ENCODE measurements at regions of chr6 and their contacts with region 1.

Region 1: DNA sequence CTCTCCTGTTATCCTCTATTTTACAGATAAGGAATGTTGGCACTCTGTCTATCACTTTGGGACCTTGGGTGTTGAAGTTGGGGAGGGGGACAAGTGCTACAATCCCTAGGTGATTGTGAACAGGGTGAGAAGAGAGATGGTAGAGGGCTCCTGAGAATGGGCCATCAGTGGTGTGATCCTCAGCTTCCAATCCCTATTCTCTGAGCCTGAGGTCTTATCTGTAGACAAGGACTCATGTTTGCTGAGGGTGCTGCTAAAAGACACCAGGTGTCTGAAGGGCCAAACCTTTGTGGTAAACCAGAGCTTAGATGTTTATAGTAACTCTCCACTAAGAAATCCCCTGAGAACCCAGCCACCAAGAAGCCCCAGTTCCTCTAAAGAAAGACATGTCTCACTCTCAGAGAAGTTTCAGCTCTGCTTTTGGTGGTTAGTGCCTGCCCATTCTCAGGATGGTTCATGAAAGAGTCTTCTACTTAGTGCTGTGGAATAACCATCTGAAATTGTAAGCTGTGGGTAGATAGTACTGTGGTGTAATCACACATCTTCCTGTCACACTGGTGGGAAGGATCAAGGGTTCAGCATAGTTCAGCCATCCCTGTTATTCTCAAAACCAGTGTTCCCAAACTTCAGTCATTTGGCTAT is 58.2 kb upstream of the IL20RA start:
- DNase-seq: no peak
- ATAC-seq: peak; percentile 81
- H3K4me3 Mint-ChIP-seq: peak overlapping the region; percentile 80
- H3K27ac Mint-ChIP-seq: peak overlapping the region; percentile 98
- H3K4me1 Mint-ChIP-seq: peaks cover 93% of the 10 kb centered on the region
- H3K27me3 Mint-ChIP-seq: no peaks in the 10 kb centered on the region
- CTCF ChIP-seq: no peak

Region 2: GRCh38 chr6:137043710-137044365 is 59.1 kb before region 1 on chr6:
- CTCF ChIA-PET with region 1: no interaction called
- POLR2A ChIA-PET with region 1: no interaction called
- intact Hi-C with region 1: no loop called
- DNase-seq: no peak
- ATAC-seq: peak; percentile 21
- H3K4me3 Mint-ChIP-seq: peak overlapping the region; percentile 81
- H3K27ac Mint-ChIP-seq: no peak overlapping the region
- H3K4me1 Mint-ChIP-seq: peaks cover 6% of the 10 kb centered on the region
- H3K27me3 Mint-ChIP-seq: peaks cover 67% of the 10 kb centered on the region
- CTCF ChIP-seq: no peak

Region 3: DNA sequence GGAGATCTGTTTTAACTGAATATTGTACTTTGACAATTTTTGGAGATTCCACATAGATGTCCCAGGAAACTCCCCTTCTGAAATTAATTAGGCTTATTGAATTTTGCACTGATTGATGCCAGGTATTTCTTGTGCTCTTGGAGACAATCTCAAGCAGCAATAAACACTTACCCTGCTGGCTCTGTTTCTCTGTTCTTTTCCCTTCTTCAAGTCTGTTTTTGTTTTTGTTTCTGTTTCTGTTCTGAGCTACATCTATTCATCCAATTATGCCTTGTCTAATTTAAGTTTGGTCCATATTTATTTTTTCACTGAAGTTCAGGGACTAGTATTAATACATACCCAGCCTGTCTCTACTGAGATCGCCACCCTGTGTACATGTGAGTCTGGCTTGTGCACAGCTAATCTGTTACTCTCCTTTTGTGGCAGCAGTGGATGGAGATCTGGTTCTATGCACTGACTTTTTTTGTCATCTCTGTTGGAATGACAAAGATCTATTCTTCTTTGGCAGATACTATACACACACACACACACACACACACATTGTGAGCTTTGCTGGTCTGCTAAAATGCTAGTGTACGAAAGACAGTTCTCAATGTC is 18.5 kb after region 1 on chr6:
- CTCF ChIA-PET with region 1: interaction called, 11 read pairs
- POLR2A ChIA-PET with region 1: interaction called, 14 read pairs
- intact Hi-C with region 1: loop called (anchors 1 kb)
- DNase-seq: no peak
- ATAC-seq: peak; percentile 58
- H3K4me3 Mint-ChIP-seq: peak overlapping the region; percentile 70
- H3K27ac Mint-ChIP-seq: peak overlapping the region; percentile 91
- H3K4me1 Mint-ChIP-seq: peaks cover 44% of the 10 kb centered on the region
- H3K27me3 Mint-ChIP-seq: no peaks in the 10 kb centered on the region
- CTCF ChIP-seq: no peak

Region 4: GRCh38 chr6:137171824-137172705 is 69.1 kb after region 1 on chr6:
- CTCF ChIA-PET with region 1: interaction called, 82 read pairs
- POLR2A ChIA-PET with region 1: interaction called, 45 read pairs
- intact Hi-C with region 1: loop called (anchors 1 kb)
- DNase-seq: no peak
- ATAC-seq: peak; percentile 68
- H3K4me3 Mint-ChIP-seq: peak overlapping the region; percentile 63
- H3K27ac Mint-ChIP-seq: peak overlapping the region; percentile 95
- H3K4me1 Mint-ChIP-seq: peaks cover 90% of the 10 kb centered on the region
- H3K27me3 Mint-ChIP-seq: no peaks in the 10 kb centered on the region
- CTCF ChIP-seq: no peak

Region 5: DNA sequence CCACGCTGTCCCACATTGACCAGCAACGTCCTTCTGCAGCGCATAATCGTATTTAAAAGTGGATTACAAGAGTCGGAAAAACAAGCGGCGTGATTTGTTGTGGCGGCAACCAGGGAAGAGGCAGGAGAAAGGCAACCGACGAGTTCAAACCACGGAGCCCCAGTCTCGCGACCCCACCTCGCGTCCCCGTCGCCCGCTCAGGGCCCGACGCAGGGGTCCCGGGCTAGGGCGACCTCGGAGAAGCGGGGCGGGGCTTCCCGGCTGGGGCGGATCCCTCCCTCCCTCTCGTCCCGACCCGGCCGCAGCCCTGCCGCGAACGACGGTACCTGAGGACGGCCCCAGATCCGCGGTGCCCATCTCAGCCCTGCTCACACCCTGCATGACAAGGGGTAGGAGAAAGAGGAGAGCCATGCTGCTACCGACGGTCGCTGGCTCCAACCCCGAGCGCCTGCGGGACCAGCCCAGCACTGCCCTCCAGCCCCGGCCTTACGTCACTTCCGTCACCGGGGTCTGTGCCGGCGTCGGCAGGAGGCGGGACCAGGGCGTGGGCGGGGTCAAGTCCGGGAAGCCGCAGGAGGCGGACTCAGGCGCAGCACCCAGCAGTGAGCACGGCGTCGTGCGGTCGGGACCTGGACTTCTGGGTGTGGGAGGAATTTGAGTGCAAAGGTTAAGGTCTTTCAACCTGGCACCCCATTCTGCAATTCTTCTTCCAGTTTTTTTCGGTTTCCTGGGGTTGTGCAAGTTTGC is 116.1 kb after region 1 on chr6 and contains the start of gene IFNGR1:
- CTCF ChIA-PET with region 1: interaction called, 8 read pairs
- POLR2A ChIA-PET with region 1: interaction called, 18 read pairs
- intact Hi-C with region 1: loop called (anchors 1 kb)
- DNase-seq: peak; percentile 97
- ATAC-seq: peak; percentile 85
- H3K4me3 Mint-ChIP-seq: peak within 1 kb of the TSS; percentile 99
- H3K27ac Mint-ChIP-seq: peak within 1 kb of the TSS; percentile 98
- H3K4me1 Mint-ChIP-seq: peaks cover 83% of the 10 kb centered on the region
- H3K27me3 Mint-ChIP-seq: no peaks in the 10 kb centered on the region
- CTCF ChIP-seq: no peak
- total RNA-seq, gene IFNGR1: 60.5 and 65.6 TPM in 2 replicates

Region 6: GRCh38 chr6:137233911-137234863 is 131.2 kb after region 1 on chr6:
- CTCF ChIA-PET with region 1: no interaction called
- POLR2A ChIA-PET with region 1: interaction called, 3 read pairs
- intact Hi-C with region 1: loop called (anchors 1 kb)
- DNase-seq: no peak
- ATAC-seq: peak; percentile 76
- H3K4me3 Mint-ChIP-seq: peak overlapping the region; percentile 73
- H3K27ac Mint-ChIP-seq: peak overlapping the region; percentile 80
- H3K4me1 Mint-ChIP-seq: peaks cover 70% of the 10 kb centered on the region
- H3K27me3 Mint-ChIP-seq: no peaks in the 10 kb centered on the region
- CTCF ChIP-seq: no peak

Region 7: DNA sequence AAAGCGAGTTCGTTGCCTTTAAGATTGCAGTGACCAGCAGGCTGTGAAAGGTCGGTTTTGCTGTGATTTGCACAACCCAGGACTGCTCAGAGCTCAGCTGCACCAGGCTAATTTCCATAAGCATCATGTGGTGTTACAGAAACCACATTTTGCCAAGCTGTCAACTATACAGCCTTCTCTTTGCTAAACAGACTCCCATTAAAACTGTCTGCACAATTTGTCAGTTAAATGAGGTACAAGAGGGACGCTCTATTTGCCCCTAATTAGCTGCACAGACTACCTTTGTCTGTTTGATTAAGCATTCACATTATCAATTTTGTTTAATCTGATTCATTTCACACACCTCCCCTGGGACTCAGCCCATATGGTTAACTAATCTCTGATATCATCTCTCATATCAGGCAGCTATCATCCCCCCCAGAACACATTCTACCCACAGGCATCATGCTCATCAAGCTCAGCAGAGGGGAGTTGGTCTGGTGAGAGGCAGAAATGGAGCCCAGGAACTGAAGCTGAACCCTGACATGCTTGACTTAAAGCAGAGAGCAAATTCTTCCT is 329.2 kb after region 1 on chr6:
- CTCF ChIA-PET with region 1: no interaction called
- POLR2A ChIA-PET with region 1: interaction called, 6 read pairs
- intact Hi-C with region 1: loop called (anchors 2 kb)
- DNase-seq: no peak
- ATAC-seq: peak; percentile 65
- H3K4me3 Mint-ChIP-seq: peak overlapping the region; percentile 81
- H3K27ac Mint-ChIP-seq: peak overlapping the region; percentile 26
- H3K4me1 Mint-ChIP-seq: peaks cover 40% of the 10 kb centered on the region
- H3K27me3 Mint-ChIP-seq: no peaks in the 10 kb centered on the region
- CTCF ChIP-seq: no peak

Region 8: DNA sequence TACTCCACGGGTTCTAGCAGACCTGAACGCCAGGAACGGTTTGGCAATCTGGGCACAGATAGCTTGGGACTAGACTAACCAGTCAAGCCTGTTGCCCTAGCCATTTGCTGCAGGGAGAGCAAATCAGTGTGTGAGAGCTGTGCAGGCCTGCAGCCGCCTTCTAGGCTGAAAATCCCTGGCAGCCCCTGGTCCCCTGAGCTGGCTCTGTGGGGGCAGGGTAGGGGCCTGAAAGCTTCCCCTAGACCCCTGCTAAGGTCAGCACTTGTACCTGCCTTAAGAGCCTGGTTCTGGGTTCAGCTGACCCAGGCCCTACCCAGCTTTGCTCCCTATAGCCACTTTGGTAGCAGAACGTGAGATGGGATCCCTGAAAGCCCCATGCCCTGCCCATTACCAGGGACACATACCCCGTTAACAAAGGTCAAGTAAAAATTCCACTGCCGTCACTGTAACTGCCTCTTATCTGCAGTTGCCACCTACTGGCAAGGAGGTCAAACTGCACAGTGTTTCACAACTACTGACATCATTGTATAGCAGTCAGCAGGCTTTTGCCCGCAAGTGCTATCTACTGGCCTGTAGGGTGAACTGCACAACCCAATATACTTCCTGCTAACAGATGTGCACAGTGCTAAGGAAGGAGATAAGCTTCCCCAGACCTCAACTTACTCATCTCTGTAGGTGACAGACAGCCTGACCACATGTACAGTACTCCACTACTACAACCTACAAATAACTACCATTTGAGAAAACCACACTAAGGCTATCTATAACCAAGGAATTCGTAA is 486.3 kb after region 1 on chr6:
- CTCF ChIA-PET with region 1: no interaction called
- POLR2A ChIA-PET with region 1: no interaction called
- intact Hi-C with region 1: no loop called
- DNase-seq: no peak
- ATAC-seq: peak; percentile 90
- H3K4me3 Mint-ChIP-seq: no peak overlapping the region
- H3K27ac Mint-ChIP-seq: no peak overlapping the region
- H3K4me1 Mint-ChIP-seq: no peaks in the 10 kb centered on the region
- H3K27me3 Mint-ChIP-seq: peaks cover 30% of the 10 kb centered on the region
- CTCF ChIP-seq: no peak

Measured in activated B cell treated with CpG ODN at 0.5 μM for 24 hours (primary cell).